ENCODE measurements at regions of chr4 and their contacts with region 1.

Region 1: DNA sequence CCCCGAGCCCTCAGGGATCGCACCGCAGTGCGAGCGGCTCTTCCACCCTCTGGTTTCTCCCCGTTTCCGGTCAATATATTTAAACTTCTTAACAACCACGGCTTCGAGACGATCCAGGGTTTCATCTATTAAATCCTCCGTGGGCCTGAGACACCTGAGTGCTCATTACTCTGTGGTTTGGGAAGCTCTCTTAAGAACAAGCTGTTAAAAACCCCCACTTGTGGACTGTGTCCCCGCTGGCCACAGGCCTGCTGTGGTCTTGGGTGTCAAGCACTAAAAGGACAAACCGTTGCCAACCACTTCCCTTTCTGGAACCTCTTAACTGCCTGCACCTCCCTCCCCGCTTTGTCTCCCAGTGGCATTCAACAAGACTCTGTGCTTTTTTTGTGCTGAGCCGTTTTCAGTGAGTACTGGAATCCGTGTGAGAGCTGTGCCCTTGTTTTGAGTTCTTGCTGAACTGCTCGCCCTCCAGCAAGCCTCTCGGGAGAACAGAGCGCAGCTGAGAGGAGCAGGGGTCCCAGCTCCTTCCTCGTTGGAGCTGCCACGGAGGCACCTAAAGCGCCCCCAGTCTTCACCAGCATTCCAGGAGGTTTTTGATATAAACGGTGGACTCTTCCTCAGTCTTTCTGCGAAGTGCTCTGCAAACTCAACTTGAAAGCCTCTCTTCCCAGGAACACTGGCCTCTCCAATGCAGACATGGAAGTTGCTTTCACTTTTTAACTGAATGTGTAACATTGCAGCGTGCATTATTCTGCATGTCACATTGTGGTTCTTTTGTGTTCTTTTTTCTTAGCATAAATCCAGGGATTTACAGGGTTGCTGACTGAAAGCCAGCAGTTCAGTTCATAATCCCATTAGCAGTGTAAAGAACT is 691 bp upstream of the IGFBP7 start:
- DNase-seq: peak; percentile 46
- ATAC-seq: peak; percentile 54 to 65

Region 2: GRCh38 chr4:56712049-56712448 is 398.8 kb before region 1 on chr4:
- intact Hi-C with region 1: no loop called
- DNase-seq: no peak
- ATAC-seq: no peak

Region 3: DNA sequence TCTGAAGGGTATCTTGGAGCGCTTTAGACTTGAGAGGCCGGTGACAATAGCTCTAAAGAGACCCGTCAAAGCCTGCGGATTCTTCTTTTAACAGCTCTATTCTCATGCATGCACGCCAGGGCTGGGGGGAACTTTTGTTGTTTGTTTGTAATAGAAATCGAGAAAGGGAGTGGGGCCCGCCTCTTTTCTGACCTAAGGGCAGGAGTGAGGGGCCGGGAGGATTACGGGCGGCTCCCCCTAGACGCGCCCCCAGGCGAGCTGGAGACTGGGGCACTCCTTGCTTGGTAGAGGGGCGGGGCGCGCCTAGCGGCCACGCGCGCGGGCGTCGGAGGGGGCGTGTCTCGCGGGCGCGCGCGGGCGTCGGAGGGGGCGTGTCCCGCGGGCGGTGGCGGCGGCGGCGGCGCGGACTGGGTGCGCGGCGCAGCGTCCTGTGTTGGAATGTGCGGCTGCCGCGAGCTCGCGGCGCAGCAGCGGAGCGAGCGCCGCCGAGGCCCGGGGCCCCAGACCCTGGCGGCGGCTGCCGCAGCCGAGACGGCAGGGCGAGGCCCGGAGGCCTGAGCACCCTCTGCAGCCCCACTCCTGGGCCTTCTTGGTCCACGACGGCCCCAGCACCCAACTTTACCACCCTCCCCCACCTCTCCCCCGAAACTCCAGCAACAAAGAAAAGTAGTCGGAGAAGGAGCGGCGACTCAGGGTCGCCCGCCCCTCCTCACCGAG is 203.2 kb before region 1 on chr4 and contains the start of gene REST:
- intact Hi-C with region 1: loop called in 1 of 2 experiments (anchors 10 kb)
- DNase-seq: peak; percentile 81
- ATAC-seq: peak; percentile 83 to 85
- total RNA-seq, gene REST: 26.2 to 27.9 TPM

Region 4: GRCh38 chr4:57043347-57044251 is 67.3 kb before region 1 on chr4:
- intact Hi-C with region 1: loop called (anchors 5 to 10 kb)
- DNase-seq: no peak
- ATAC-seq: peak; percentile 76

Measured in left cardiac atrium (tissue), 4 donors.